Dendritic cell treated with granulocyte-macrophage colony-stimulating factor and Interleukin-4, amounts not matched to agents 40 ng/mL and 50 ng/mL, for 4 days (primary cell): ENCODE measurements at regions of chr3 and their contacts with region 1.

Region 1: DNA sequence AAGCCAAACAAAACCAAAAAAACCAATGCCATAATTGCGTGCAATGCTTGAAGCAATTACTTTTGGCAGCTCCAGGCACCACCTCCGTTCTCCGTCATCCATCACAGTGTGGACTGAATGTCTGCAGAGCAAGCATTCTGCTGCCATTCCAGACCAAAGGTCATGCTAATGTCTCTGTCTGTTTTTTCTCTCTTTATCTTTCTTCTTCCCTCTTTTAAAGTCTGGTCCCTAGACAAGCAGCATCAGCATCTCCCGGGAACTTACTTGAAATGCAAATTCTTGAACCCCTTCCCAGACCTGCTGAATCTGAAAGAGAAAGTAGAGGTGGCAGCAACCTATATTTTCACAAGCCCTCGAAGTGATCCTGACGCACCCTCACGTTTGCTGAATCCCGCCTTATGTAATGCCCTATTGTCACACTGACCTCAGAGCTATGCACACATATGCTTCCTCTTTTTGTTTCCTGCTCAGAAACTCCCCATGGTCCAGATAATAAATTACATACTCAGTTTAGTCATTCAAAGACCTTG is 297.3 kb upstream of the PROK2 start:
- H3K4me3 Mint-ChIP-seq: no peak overlapping the region
- H3K27ac Mint-ChIP-seq: peak overlapping the region; percentile 12
- H3K4me1 Mint-ChIP-seq: peaks cover 80% of the 10 kb centered on the region
- H3K27me3 Mint-ChIP-seq: peaks cover 17% of the 10 kb centered on the region

Region 2: DNA sequence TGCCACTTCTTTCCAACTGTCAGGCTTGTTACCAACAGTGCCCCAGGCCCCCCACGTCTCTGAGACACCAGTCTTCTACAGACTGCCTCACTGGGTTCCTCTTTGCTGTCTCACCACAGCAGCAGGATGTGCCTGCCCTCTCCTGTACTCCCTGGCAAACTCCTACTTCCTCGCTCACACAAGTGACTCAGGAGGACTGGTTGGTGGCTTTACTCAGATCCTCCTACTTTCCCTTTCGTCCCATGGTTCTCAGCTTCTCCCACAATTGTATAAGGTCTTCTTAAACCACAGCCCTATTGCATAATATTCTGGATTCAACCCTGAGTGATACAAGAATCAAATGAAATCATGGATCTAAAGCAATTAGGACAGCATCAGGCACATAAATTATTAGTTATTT is 50.7 kb before region 1 on chr3:
- intact Hi-C with region 1: loop called (anchors 10 kb)
- H3K4me3 Mint-ChIP-seq: no peak overlapping the region
- H3K27ac Mint-ChIP-seq: peak overlapping the region; percentile 61
- H3K4me1 Mint-ChIP-seq: peaks cover 60% of the 10 kb centered on the region
- H3K27me3 Mint-ChIP-seq: no peaks in the 10 kb centered on the region

Region 3: GRCh38 chr3:72050048-72050689 is 32.1 kb before region 1 on chr3:
- intact Hi-C with region 1: no loop called
- H3K4me3 Mint-ChIP-seq: no peak overlapping the region
- H3K27ac Mint-ChIP-seq: no peak overlapping the region
- H3K4me1 Mint-ChIP-seq: peaks cover 27% of the 10 kb centered on the region
- H3K27me3 Mint-ChIP-seq: peaks cover 4% of the 10 kb centered on the region

Region 4: GRCh38 chr3:72100601-72101187 is 18.4 kb after region 1 on chr3:
- intact Hi-C with region 1: loop called (anchors 1 kb)
- H3K4me3 Mint-ChIP-seq: peak overlapping the region; percentile 75
- H3K27ac Mint-ChIP-seq: peak overlapping the region; percentile 93
- H3K4me1 Mint-ChIP-seq: peaks cover 71% of the 10 kb centered on the region
- H3K27me3 Mint-ChIP-seq: peaks cover 36% of the 10 kb centered on the region